OCI-LY7 (cell line): ENCODE measurements at regions of chr16 and their contacts with region 1.

Region 1: DNA sequence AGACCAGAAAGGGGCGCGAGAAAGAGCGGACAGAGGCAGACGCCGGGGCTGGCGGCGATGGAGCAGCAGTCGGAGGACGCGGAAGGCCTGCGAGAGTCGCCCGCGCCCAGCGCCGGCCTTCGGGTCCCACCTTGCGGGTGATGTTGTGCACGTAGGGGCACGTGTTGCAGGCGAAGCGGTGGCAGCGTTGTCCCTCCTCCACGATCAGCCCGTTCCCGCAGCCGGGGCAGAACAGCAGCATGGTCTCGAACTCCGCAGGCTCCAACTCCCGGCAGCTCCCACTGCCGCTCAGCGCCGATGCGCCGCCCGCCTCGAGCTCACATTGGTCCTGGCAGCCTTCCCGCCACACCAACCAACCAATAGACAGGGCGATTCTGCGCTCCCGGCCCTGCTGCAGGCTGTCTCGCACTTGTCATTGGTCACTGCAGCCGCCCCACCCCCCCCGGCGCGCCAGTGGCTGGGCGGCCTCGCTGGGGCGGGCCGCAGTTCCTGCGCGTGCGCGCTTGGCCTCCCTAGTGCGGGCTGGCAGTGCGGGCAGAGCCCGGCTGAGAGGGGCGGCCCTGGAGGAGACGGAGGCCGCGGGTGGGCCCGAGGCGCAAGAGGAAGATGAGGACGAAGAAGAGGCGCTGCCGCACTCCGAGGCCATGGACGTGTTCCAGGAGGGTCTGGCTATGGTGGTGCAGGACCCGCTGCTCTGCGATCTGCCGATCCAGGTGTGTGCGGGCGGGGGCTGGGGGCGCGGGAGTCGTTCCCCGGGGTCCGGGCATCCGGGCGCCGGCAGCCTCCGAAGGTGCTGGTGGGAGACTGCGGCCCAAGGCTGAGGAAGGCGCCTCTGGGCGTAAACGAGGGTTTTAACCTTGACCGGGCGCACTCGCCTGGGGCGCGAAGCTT is at the starts of genes POLR3K and SNRNP25:
- DNase-seq: peak; percentile 98
- H3K4me3 ChIP-seq: peak within 1 kb of the TSS; percentile 90
- H3K27ac ChIP-seq: peak within 1 kb of the TSS; percentile 78
- H3K4me1 ChIP-seq: peaks cover 18% of the 10 kb centered on the region
- CTCF ChIP-seq: no peak
- total RNA-seq, gene POLR3K: 26.2 and 28.6 TPM in 2 replicates
- total RNA-seq, gene SNRNP25: 61.4 and 68.1 TPM in 2 replicates

Region 2: DNA sequence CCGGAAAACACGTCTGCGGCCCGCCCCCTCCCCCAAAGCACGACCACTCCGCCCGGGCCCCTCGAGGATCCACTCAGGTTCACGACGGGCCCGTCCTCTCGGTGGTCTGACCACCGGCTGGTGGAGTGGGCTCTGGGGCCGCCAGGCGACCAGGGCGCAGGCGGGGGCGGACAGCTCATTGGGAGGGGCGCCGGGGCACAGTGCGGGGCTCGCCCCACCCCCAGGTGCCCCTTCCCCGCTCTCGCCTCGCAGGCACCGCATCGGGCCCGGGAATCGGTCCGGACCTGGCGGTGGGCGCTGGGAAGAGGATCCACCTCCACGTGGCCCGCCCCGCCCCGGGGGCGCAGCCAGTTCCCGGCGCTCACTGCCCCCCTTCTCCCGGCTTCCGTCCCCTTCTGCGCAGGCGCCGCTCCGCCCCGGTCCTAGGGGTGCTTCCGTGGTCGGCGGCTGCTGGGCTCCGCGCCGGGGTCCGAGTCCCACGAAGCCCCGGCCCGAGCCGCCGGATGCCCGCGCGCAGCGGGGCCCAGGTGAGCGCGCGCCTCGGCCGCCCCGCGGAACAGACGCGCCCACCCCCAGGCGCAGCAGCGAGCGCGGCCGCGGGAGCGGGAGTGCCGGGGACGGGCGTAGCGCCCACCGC is 24.3 kb after region 1 on chr16 and contains the start of gene MPG:
- CTCF ChIA-PET with region 1: no interaction called
- POLR2A ChIA-PET with region 1: no interaction called
- intact Hi-C with region 1: loop called (anchors 2 kb)
- DNase-seq: peak; percentile 88
- H3K4me3 ChIP-seq: peak within 1 kb of the TSS; percentile 86
- H3K27ac ChIP-seq: peak within 1 kb of the TSS; percentile 35
- H3K4me1 ChIP-seq: peaks cover 29% of the 10 kb centered on the region
- CTCF ChIP-seq: no peak
- total RNA-seq, gene MPG: 119 and 126 TPM in 2 replicates